ENCODE measurements at regions of chr18 and their contacts with region 1.

Region 1: GRCh38 chr18:59423259-59423658 is 64.2 kb upstream of the LMAN1 start:
- DNase-seq: no peak
- H3K4me3 ChIP-seq: no peak overlapping the region
- H3K27ac ChIP-seq: no peak overlapping the region
- H3K4me1 ChIP-seq: no peaks in the 10 kb centered on the region
- H3K27me3 ChIP-seq: peaks cover 44% of the 10 kb centered on the region
- CTCF ChIP-seq: no peak

Region 2: GRCh38 chr18:59189746-59190145 is 233.5 kb before region 1 on chr18:
- CTCF ChIA-PET with region 1: no interaction called
- POLR2A ChIA-PET with region 1: interaction called, 10 read pairs
- intact Hi-C with region 1: no loop called
- DNase-seq: no peak
- H3K4me3 ChIP-seq: no peak overlapping the region
- H3K27ac ChIP-seq: no peak overlapping the region
- H3K4me1 ChIP-seq: no peaks in the 10 kb centered on the region
- H3K27me3 ChIP-seq: peaks cover 64% of the 10 kb centered on the region
- CTCF ChIP-seq: no peak

Region 3: GRCh38 chr18:59484837-59485328 is 61.6 kb after region 1 on chr18:
- CTCF ChIA-PET with region 1: no interaction called
- POLR2A ChIA-PET with region 1: no interaction called
- intact Hi-C with region 1: no loop called
- DNase-seq: no peak
- H3K4me3 ChIP-seq: no peak overlapping the region
- H3K27ac ChIP-seq: no peak overlapping the region
- H3K4me1 ChIP-seq: 0 out of 2 replicates have a peak, but pooled peaks cover 6% of the 10 kb centered on the region
- H3K27me3 ChIP-seq: no peaks in the 10 kb centered on the region
- CTCF ChIP-seq: no peak

Region 4: GRCh38 chr18:60554967-60555366 is 1131.7 kb after region 1 on chr18:
- CTCF ChIA-PET with region 1: no interaction called
- POLR2A ChIA-PET with region 1: interaction called, 28 read pairs
- intact Hi-C with region 1: no loop called
- DNase-seq: no peak
- H3K4me3 ChIP-seq: no peak overlapping the region
- H3K27ac ChIP-seq: no peak overlapping the region
- H3K4me1 ChIP-seq: no peaks in the 10 kb centered on the region
- H3K27me3 ChIP-seq: no peaks in the 10 kb centered on the region
- CTCF ChIP-seq: no peak

Measured in PC-9 (cell line).